Heart left ventricle (tissue), 16 donors: ENCODE measurements at regions of chr9 and their contacts with region 1.

Region 1: GRCh38 chr9:35096035-35096849 is at the start of gene PIGO:
- DNase-seq: peak; percentile 88 to 95 (median 91)
- ATAC-seq: peak; percentile 73 to 96 (median 94)
- H3K4me3 ChIP-seq: peak within 1 kb of the TSS; percentile 53 to 100 (median 90)
- H3K27ac ChIP-seq: peak within 1 kb of the TSS; percentile 86 to 99 (median 96)
- H3K4me1 ChIP-seq: peaks cover 0 to 16% (median 9%) of the 10 kb centered on the region in 12 donors
- H3K27me3 ChIP-seq: no peaks in the 10 kb centered on the region
- CTCF ChIP-seq: peak; percentile 57 to 79 (median 74)
- POLR2A ChIP-seq: peak in 1 of 2 donors; percentile 37
- total RNA-seq, gene PIGO: 7.0 to 13.1 (median 9.1) TPM

Region 2: GRCh38 chr9:34759432-34760134 is 336.7 kb before region 1 on chr9:
- intact Hi-C with region 1: loop called in 1 of 10 experiments (anchors 5 kb)
- DNase-seq: no peak
- ATAC-seq: peak in 2 of 4 donors; percentile 55 to 57
- H3K4me3 ChIP-seq: no peak overlapping the region
- H3K27ac ChIP-seq: no peak overlapping the region
- H3K4me1 ChIP-seq: peaks cover 0 to 5% (median 0%) of the 10 kb centered on the region in 12 donors
- H3K27me3 ChIP-seq: peaks cover 0 to 12% (median 0%) of the 10 kb centered on the region in 9 donors
- CTCF ChIP-seq: no peak
- POLR2A ChIP-seq: no peak

Region 3: DNA sequence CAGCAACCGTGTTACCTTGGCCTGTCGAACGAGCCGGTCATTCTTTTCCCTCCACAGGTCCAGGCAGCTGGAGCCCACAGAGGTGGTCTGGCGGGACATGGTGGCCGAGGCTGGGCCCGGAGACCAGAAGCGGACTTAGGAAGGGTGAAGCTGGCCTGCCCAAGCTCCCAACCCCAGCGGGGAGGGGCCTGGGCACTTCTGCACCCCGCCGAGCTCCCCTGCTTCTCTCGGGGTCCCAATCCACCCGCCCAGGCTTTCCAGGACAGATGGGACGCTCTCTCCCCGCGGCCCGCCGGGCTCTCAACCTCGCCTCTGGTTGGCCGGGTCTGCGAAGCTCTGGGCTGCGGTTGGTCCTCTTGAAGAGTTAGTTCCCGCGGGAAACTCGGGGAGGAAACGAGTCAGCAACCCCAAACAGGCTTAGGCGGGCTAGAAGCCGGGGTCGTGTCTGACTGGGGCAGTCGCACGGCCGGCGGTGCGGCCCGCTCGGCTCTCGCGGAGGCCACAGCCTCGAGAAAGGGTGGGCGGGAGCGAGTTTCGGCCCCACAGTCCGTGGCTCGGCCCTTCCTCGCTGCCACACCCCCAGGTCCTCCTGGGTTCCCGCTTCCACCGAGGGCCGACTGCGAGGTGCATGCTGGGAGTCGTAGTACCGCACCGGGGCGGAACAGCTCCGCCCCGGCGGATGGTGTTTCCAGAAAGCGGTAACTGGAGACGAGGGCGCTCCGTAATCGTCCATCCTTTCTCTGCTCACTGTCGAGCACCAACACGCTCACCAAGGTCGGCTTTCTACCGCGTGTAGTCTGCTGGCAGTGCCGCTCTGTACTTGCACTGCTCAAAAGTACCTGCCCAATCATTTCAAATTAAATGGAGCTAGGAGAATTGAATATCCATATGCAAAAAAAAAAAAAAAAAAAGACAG is 16.6 kb before region 1 on chr9 and contains the start of gene FANCG:
- intact Hi-C with region 1: loop called in 1 of 10 experiments (anchors 1 kb)
- DNase-seq: peak; percentile 91 to 94 (median 94)
- ATAC-seq: peak; percentile 92 to 98 (median 98)
- H3K4me3 ChIP-seq: peak within 1 kb of the TSS; percentile 42 to 94 (median 73)
- H3K27ac ChIP-seq: peak within 1 kb of the TSS in 11 of 12 donors; percentile 55 to 85 (median 76)
- H3K4me1 ChIP-seq: peaks cover 2 to 24% (median 13%) of the 10 kb centered on the region in 12 donors
- H3K27me3 ChIP-seq: no peaks in the 10 kb centered on the region
- CTCF ChIP-seq: peak in 1 of 12 donors; percentile 25
- POLR2A ChIP-seq: peak in 1 of 2 donors; percentile 61
- total RNA-seq, gene FANCG: 0.71 to 11.8 (median 2.9) TPM